ENCODE measurements at regions of chr4 and their contacts with region 1.

Region 1: GRCh38 chr4:180953572-180953971 is 1289.6 kb upstream of the TENM3 start:
- DNase-seq: no peak
- H3K4me3 ChIP-seq: no peak overlapping the region
- H3K27ac ChIP-seq: no peak overlapping the region
- H3K4me1 ChIP-seq: no peaks in the 10 kb centered on the region
- H3K27me3 ChIP-seq: no peaks in the 10 kb centered on the region
- CTCF ChIP-seq: no peak
- POLR2A ChIP-seq: no peak

Region 2: DNA sequence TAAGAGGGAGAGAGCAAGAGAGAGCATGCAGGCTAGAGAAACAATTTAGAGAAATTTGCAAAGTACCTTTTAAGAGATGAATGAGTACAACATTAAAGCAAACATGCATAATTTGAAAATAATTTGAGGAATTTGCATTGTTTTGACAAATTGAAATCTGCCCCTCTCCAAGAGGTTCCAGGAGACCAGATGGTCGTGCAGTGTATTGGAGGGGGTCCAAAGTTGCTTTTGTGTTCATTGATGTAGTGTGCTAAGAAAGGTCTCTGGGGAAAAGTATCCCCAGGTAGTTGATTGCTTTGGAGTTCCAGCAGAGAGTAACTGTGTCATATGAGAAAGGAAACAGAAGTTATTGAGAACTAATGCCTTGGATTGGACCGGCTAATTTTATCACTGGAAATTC is 654.6 kb after region 1 on chr4:
- intact Hi-C with region 1: loop called (anchors 5 kb)
- DNase-seq: no peak
- H3K4me3 ChIP-seq: no peak overlapping the region
- H3K27ac ChIP-seq: no peak overlapping the region
- H3K4me1 ChIP-seq: no peaks in the 10 kb centered on the region
- H3K27me3 ChIP-seq: no peaks in the 10 kb centered on the region
- CTCF ChIP-seq: no peak
- POLR2A ChIP-seq: no peak

Measured in breast epithelium (tissue), 4 donors.